HEK293 (cell line): ENCODE measurements at regions of chr7 and their contacts with region 1.

Region 1: GRCh38 chr7:30564243-30564892 is 30.3 kb upstream of the GARS1 start:
- H3K4me3 ChIP-seq: no peak overlapping the region
- H3K27ac ChIP-seq: no peak overlapping the region
- H3K4me1 ChIP-seq: peaks cover 4% of the 10 kb centered on the region
- CTCF ChIP-seq: peak; percentile 76

Region 2: DNA sequence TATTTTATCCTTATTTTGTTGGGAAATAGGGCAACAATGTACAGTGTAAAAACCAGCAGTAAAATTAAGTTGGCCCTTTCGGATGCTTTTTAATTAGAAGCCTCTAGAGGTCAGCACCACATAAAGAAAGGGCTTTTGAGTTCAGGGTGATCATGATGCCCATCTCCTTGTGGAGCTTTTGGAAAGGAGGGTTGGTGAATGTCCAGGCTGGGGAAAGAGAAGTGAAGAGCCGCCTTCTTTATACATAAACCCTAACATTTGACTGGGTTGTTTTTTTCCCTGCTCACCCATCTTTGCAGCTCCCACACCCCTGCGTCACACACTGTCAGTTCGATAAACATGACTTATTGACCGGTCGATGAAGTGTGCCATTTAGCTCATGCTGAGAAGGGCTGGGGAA is 399.8 kb before region 1 on chr7:
- CTCF ChIA-PET with region 1: interaction called, 15 read pairs
- POLR2A ChIA-PET with region 1: no interaction called
- H3K4me3 ChIP-seq: no peak overlapping the region
- H3K27ac ChIP-seq: no peak overlapping the region
- H3K4me1 ChIP-seq: peaks cover 17% of the 10 kb centered on the region
- CTCF ChIP-seq: no peak

Region 3: GRCh38 chr7:30469303-30469702 is 95.1 kb before region 1 on chr7:
- CTCF ChIA-PET with region 1: interaction called, 10 read pairs
- POLR2A ChIA-PET with region 1: no interaction called
- H3K4me3 ChIP-seq: no peak overlapping the region
- H3K27ac ChIP-seq: no peak overlapping the region
- H3K4me1 ChIP-seq: no peaks in the 10 kb centered on the region; the same call in 1 of the 2 replicates
- CTCF ChIP-seq: peak; percentile 68

Region 4: GRCh38 chr7:30510124-30511075 is 54.0 kb before region 1 on chr7:
- CTCF ChIA-PET with region 1: interaction called, 39 read pairs
- POLR2A ChIA-PET with region 1: no interaction called
- H3K4me3 ChIP-seq: no peak overlapping the region
- H3K27ac ChIP-seq: no peak overlapping the region
- H3K4me1 ChIP-seq: peaks cover 4% of the 10 kb centered on the region; the same call in 1 of the 2 replicates
- CTCF ChIP-seq: no peak

Region 5: DNA sequence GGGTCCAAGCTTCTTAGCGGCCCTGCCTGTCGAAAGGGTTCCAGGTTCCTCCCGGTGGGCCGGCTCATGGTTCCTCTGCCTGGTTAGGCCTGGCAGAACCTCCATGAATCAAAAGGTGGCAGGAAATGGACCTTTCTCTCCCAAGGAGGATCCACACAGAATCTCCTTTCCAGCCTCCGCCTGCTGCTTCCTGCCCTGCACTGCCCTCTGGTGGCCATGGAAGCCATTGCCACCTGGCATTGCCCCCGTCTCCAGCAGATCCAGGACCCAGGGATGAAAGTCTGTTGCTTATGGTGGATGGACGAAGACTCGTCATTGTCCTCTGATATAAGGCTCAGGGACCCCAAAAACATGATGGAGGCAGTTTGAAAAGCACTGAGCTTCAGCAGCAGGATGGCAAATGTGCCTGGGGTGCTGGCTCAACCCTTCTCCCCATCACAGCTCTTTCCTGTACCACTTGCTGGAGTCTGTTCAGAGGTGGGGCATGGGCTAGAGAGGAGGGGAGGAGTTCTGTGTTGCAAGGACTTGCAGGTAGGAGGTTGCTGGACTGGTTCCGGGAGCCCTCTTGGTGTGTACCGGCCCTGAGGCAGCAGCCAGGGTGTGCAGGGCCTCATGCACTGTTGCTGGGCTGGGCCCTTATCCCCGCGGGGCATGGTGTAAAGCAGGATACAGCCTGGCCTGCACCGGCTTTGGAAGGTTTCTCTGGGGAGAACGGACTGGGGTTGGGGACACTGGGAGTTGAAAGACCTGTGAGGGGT is 176.2 kb after region 1 on chr7:
- CTCF ChIA-PET with region 1: interaction called, 11 read pairs
- POLR2A ChIA-PET with region 1: no interaction called
- H3K4me3 ChIP-seq: no peak overlapping the region
- H3K27ac ChIP-seq: no peak overlapping the region
- H3K4me1 ChIP-seq: no peaks in the 10 kb centered on the region
- CTCF ChIP-seq: peak; percentile 68